ENCODE measurements at regions of chr20 and their contacts with region 1.

Region 1: GRCh38 chr20:9978397-9979004 is 56.3 kb upstream of the ANKEF1 start:
- DNase-seq: peak; percentile 6 to 14
- ATAC-seq: peak; percentile 83 to 85
- H3K4me3 ChIP-seq: no peak overlapping the region
- H3K27ac ChIP-seq: no peak overlapping the region
- H3K4me1 ChIP-seq: no peaks in the 10 kb centered on the region
- H3K27me3 ChIP-seq: no peaks in the 10 kb centered on the region
- CTCF ChIP-seq: peak; percentile 29 to 62 (median 56)
- POLR2A ChIP-seq: no peak

Region 2: GRCh38 chr20:9573335-9574121 is 405.0 kb before region 1 on chr20:
- in situ Hi-C with region 1: no loop called
- intact Hi-C with region 1: no loop called
- DNase-seq: no peak
- ATAC-seq: no peak
- H3K4me3 ChIP-seq: no peak overlapping the region
- H3K27ac ChIP-seq: no peak overlapping the region
- H3K4me1 ChIP-seq: no peaks in the 10 kb centered on the region
- H3K27me3 ChIP-seq: no peaks in the 10 kb centered on the region
- CTCF ChIP-seq: no peak
- POLR2A ChIP-seq: no peak

Region 3: GRCh38 chr20:9626357-9626756 is 352.1 kb before region 1 on chr20:
- in situ Hi-C with region 1: no loop called
- intact Hi-C with region 1: no loop called
- DNase-seq: no peak
- ATAC-seq: no peak
- H3K4me3 ChIP-seq: no peak overlapping the region
- H3K27ac ChIP-seq: no peak overlapping the region
- H3K4me1 ChIP-seq: no peaks in the 10 kb centered on the region
- H3K27me3 ChIP-seq: no peaks in the 10 kb centered on the region
- CTCF ChIP-seq: no peak
- POLR2A ChIP-seq: no peak

Region 4: DNA sequence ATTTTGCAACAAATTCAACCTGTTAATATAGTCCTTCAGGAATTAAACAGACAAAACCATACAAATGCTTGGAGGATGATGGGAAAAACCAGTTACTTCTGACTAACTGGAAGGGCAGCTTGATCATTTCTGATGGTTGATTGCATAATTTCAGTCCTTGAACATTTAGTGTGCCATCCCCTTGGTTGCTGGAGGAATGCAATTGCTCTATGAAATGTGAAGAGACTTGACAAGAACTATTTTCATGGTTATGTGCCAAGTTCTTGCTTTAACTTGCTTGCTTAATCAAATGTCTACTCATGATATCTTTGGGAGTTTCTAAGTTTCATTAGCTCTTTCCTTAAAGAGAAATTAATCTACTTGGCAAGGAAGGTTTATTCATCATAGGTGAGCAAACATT is 101.5 kb after region 1 on chr20:
- in situ Hi-C with region 1: loop called in 1 of 4 experiments (anchors 10 kb)
- intact Hi-C with region 1: no loop called
- DNase-seq: no peak
- ATAC-seq: no peak
- H3K4me3 ChIP-seq: no peak overlapping the region
- H3K27ac ChIP-seq: no peak overlapping the region
- H3K4me1 ChIP-seq: no peaks in the 10 kb centered on the region
- H3K27me3 ChIP-seq: no peaks in the 10 kb centered on the region
- CTCF ChIP-seq: no peak
- POLR2A ChIP-seq: no peak

Region 5: GRCh38 chr20:10090588-10091166 is 112.2 kb after region 1 on chr20:
- in situ Hi-C with region 1: loop called in 3 of 4 experiments (anchors 5 to 10 kb)
- intact Hi-C with region 1: loop called (anchors 1 kb)
- DNase-seq: no peak
- ATAC-seq: peak in 1 of 2 donors; percentile 56
- H3K4me3 ChIP-seq: no peak overlapping the region
- H3K27ac ChIP-seq: no peak overlapping the region
- H3K4me1 ChIP-seq: no peaks in the 10 kb centered on the region
- H3K27me3 ChIP-seq: no peaks in the 10 kb centered on the region
- CTCF ChIP-seq: peak in 4 of 5 experiments; percentile 21 to 58 (median 54)
- POLR2A ChIP-seq: no peak

Region 6: GRCh38 chr20:10427060-10427692 is 448.7 kb after region 1 on chr20:
- in situ Hi-C with region 1: loop called in 3 of 4 experiments (anchors 5 to 10 kb)
- intact Hi-C with region 1: loop called (anchors 2 kb)
- DNase-seq: no peak
- ATAC-seq: no peak
- H3K4me3 ChIP-seq: no peak overlapping the region
- H3K27ac ChIP-seq: no peak overlapping the region
- H3K4me1 ChIP-seq: peaks cover 37 to 51% of the 10 kb centered on the region in 2 donors
- H3K27me3 ChIP-seq: no peaks in the 10 kb centered on the region
- CTCF ChIP-seq: peak; percentile 27 to 78 (median 51)
- POLR2A ChIP-seq: no peak

Region 7: GRCh38 chr20:10536531-10536930 is 558.0 kb after region 1 on chr20:
- in situ Hi-C with region 1: no loop called
- intact Hi-C with region 1: loop called (anchors 10 kb)
- DNase-seq: no peak
- ATAC-seq: no peak
- H3K4me3 ChIP-seq: no peak overlapping the region
- H3K27ac ChIP-seq: no peak overlapping the region
- H3K4me1 ChIP-seq: no peaks in the 10 kb centered on the region
- H3K27me3 ChIP-seq: no peaks in the 10 kb centered on the region
- CTCF ChIP-seq: peak in 1 of 5 experiments; percentile 22
- POLR2A ChIP-seq: no peak

Region 8: DNA sequence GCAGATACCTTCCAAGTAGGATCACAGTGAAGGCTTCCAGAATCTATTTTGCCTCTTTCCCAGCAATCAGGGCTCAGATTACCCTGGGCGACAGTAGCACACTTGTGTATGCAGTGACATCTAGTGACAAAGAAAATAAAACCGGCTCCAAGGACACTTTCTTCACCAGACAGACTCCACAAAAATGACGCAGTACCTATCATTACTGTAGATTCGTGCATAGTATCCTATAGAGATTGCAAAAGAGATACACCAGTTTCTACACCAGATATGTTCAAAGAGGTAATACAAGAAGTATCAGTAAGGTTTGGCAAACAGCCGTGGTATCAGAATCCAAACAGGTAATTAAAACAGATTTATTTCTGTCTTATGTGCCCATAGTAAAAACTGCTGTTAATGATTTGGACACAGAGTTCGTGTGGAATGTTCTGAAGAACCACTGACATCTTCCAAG is 1295.7 kb after region 1 on chr20:
- in situ Hi-C with region 1: no loop called
- intact Hi-C with region 1: loop called (anchors 2 kb)
- DNase-seq: peak; percentile 14 to 18
- ATAC-seq: peak; percentile 85 to 95
- H3K4me3 ChIP-seq: no peak overlapping the region
- H3K27ac ChIP-seq: no peak overlapping the region
- H3K4me1 ChIP-seq: peaks cover 0 to 6% of the 10 kb centered on the region in 2 donors
- H3K27me3 ChIP-seq: no peaks in the 10 kb centered on the region
- CTCF ChIP-seq: peak; percentile 26 to 67 (median 44)
- POLR2A ChIP-seq: no peak

Measured in gastrocnemius medialis (tissue), 4 donors.